Activated CD4-positive, alpha-beta T cell treated with anti-CD3 and anti-CD28 coated beads for 36 hours (primary cell): ENCODE measurements at regions of chr6 and their contacts with region 1.

Region 1: GRCh38 chr6:150004783-150005717 is 20.3 kb downstream of the RAET1L start:
- DNase-seq: peak; percentile 93
- ATAC-seq: peak; percentile 74
- H3K4me3 Mint-ChIP-seq: peak overlapping the region; percentile 75
- H3K27ac Mint-ChIP-seq: no peak overlapping the region
- H3K4me1 Mint-ChIP-seq: peaks cover 59% of the 10 kb centered on the region
- H3K27me3 Mint-ChIP-seq: peaks cover 30% of the 10 kb centered on the region

Region 2: DNA sequence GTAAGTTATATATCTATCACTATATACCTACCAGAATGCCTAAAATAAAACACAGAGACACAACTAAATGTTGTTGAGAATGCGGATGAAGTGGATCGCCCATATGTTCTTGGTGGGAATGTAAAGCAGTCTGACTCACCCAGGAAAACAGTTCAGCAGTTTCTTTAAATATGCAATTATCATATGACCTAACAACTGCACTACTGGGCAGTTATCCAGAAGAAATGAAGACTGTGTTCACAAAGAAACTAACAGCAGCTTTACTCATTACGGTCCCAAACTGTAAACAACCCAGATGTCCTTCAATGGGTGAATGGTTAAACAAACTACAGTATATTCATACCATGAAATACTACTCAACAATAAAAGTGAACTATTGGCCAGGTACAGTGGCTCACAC is 506.0 kb before region 1 on chr6:
- CTCF ChIA-PET with region 1: no interaction called
- POLR2A ChIA-PET with region 1: no interaction called
- intact Hi-C with region 1: loop called in 1 of 2 experiments (anchors 10 kb)
- DNase-seq: no peak
- ATAC-seq: no peak
- H3K4me3 Mint-ChIP-seq: no peak overlapping the region
- H3K27ac Mint-ChIP-seq: peak overlapping the region; percentile 76
- H3K4me1 Mint-ChIP-seq: peaks cover 85% of the 10 kb centered on the region
- H3K27me3 Mint-ChIP-seq: no peaks in the 10 kb centered on the region

Region 3: GRCh38 chr6:149941583-149942431 is 63.2 kb before region 1 on chr6 and contains the start of gene ULBP2:
- CTCF ChIA-PET with region 1: no interaction called
- POLR2A ChIA-PET with region 1: no interaction called
- intact Hi-C with region 1: loop called in 1 of 2 experiments (anchors 2 kb)
- DNase-seq: peak; percentile 91
- ATAC-seq: peak; percentile 92
- H3K4me3 Mint-ChIP-seq: peak within 1 kb of the TSS; percentile 77
- H3K27ac Mint-ChIP-seq: no peak within 1 kb of the TSS
- H3K4me1 Mint-ChIP-seq: peaks cover 25% of the 10 kb centered on the region
- H3K27me3 Mint-ChIP-seq: peaks cover 51% of the 10 kb centered on the region
- total RNA-seq, gene ULBP2: 0.32 to 0.43 TPM

Region 4: GRCh38 chr6:149990618-149991471 is 14.2 kb before region 1 on chr6:
- CTCF ChIA-PET with region 1: interaction called, 11 read pairs
- POLR2A ChIA-PET with region 1: no interaction called
- intact Hi-C with region 1: no loop called
- DNase-seq: peak; percentile 48
- ATAC-seq: peak; percentile 50
- H3K4me3 Mint-ChIP-seq: peak overlapping the region; percentile 68
- H3K27ac Mint-ChIP-seq: peak overlapping the region; percentile 48
- H3K4me1 Mint-ChIP-seq: peaks cover 24% of the 10 kb centered on the region
- H3K27me3 Mint-ChIP-seq: peaks cover 79% of the 10 kb centered on the region

Region 5: DNA sequence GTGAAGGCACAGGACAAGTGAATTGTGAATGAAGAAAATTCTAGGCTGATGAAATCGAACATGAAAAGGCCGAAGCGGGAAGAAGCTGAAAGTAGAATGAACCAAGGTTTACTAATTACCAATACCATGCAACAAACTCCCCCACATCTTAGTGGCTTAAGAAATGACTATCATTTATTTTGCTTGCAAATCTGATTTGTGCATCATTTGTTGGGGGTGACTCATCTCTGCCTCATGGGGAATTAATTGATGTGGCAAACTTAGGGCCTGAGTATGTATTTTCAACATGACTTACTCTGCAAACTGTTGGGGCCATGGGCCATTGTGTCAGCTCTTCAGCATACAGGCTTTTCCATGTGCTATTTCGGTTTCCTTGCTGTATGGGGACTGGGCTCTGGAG is 164.6 kb after region 1 on chr6:
- CTCF ChIA-PET with region 1: no interaction called
- POLR2A ChIA-PET with region 1: no interaction called
- intact Hi-C with region 1: loop called in 1 of 2 experiments (anchors 1 kb)
- DNase-seq: peak; percentile 73
- ATAC-seq: peak; percentile 98
- H3K4me3 Mint-ChIP-seq: no peak overlapping the region
- H3K27ac Mint-ChIP-seq: peak overlapping the region; percentile 69
- H3K4me1 Mint-ChIP-seq: peaks cover 17% of the 10 kb centered on the region
- H3K27me3 Mint-ChIP-seq: peaks cover 22% of the 10 kb centered on the region